ENCODE measurements at regions of chr2 and their contacts with region 1.

Region 1: DNA sequence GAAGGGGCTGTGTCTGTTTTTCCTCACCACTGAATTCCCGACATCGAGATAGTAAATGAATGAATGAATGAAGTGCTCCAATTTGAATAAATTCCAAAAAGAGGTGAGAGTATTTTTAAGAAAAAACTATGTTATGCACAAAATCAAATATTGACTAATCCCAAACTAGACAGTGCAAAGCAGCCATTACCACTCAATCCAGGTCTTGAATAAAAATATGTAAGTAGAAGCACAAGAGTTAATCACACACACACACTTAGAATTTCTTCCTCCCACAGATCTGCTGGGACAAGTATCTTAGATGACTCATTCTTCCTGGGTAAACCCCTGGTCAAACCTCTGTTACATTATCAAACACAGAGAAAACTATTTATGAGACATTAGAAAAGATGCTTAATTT is 102.0 kb downstream of the PLA2R1 start:
- DNase-seq: peak in 1 of 2 experiments; percentile 41
- H3K4me3 ChIP-seq: no peak overlapping the region
- H3K27ac ChIP-seq: no peak overlapping the region
- H3K4me1 ChIP-seq: 0 out of 2 replicates have a peak, but pooled peaks cover 5% of the 10 kb centered on the region
- H3K27me3 ChIP-seq: no peaks in the 10 kb centered on the region
- CTCF ChIP-seq: no peak

Region 2: DNA sequence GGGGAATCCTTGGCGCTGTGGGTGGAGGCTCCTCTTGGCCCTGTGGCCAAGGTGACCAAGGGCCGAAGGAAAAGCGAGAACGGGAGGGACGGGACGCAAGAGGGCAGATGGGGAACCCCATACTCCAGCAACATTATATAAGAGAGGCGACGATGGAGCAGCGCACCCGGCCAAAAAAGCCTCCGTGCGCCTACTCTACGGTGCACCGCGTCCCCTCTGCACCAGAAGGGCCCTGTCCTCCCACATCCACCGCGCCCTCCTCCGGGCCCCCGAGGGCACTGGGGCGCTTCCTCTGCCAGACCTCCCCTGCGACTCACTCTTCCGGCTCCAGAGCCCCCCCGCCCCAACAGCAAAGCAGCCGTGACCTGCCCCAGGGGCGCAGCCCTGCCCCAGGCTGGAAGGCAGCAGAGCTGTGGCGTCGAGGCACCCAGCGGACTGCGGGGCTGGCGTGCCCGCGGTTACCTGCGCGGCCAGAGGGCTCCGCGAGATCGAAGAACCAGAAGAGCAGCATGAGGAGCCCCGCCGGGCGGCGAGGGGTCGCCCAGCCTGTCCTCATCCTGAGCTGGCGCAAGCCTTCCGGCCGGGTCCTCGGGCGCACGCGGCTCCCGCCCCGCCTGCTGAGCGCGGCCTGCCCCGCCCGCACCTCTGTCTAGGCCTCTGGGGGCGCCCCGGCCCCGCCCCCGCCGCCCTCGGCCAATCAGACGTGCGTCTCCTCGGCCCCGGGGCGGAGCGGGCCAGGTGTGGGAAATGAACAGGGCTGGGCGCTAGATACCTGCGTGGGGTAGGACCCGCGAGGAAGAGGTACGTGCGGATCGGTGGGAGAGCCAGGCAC is 56.0 kb before region 1 on chr2:
- CTCF ChIA-PET with region 1: no interaction called
- POLR2A ChIA-PET with region 1: no interaction called
- intact Hi-C with region 1: loop called (anchors 2 kb)
- DNase-seq: peak; percentile 37 to 81
- H3K4me3 ChIP-seq: peak within 1 kb of the TSS; percentile 54
- H3K27ac ChIP-seq: no peak within 1 kb of the TSS
- H3K4me1 ChIP-seq: 0 out of 2 replicates have a peak, but pooled peaks cover 6% of the 10 kb centered on the region
- H3K27me3 ChIP-seq: no peaks in the 10 kb centered on the region
- CTCF ChIP-seq: no peak